ENCODE measurements at regions of chr20 and their contacts with region 1.

Region 1: DNA sequence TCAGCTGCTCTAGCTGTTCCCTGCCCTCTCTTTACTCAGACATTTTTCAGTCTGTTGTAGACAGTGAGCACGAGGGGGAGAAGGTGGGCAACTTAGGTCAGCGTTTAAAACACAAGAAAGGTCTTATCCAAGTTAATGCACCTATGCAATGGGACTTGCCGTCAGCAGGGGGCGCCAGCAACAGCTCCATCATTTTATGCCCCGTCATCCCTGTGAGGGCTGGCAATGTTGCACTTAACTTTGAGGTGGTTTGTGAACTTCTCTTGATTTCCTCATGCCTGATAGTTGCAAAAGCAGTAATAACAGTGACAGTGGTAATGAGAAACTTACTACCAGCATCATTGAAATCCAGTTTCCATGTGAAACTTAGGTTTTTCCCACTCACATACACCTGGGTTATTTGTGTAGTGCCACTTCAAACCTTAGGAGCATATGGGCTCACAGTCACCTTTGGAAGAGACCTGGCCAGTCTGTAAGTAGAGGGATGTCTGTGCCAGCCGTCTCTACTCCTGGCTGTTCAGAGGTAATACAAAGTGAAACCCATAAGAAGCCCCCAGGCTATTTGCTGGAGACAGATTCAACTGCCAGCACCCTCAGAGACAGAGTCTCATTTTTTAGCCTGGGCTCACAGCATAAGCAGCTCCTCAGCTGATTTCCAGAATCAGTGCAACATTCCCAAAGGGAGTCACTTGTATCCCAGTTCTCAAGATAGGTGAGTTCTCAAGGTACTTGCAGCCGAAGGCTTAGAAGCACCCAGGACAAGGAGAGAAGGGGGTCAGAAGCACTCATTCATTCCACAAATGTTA is 44.8 kb upstream of the ID1 start:
- DNase-seq: peak; percentile 71 to 89 (median 76)
- ATAC-seq: peak; percentile 79
- H3K4me3 ChIP-seq: no peak overlapping the region
- H3K27ac ChIP-seq: peak overlapping the region; percentile 57
- H3K4me1 ChIP-seq: peaks cover 9 to 25% of the 10 kb centered on the region in 2 experiments; a peak in 4 of 5 replicates
- H3K27me3 ChIP-seq: no peaks in the 10 kb centered on the region
- CTCF ChIP-seq: peak; percentile 91 to 99 (median 95)
- EP300 ChIP-seq: peak; percentile 54
- POLR2A ChIP-seq: no peak
- RAD21 ChIP-seq: peak; percentile 64 to 76

Region 2: DNA sequence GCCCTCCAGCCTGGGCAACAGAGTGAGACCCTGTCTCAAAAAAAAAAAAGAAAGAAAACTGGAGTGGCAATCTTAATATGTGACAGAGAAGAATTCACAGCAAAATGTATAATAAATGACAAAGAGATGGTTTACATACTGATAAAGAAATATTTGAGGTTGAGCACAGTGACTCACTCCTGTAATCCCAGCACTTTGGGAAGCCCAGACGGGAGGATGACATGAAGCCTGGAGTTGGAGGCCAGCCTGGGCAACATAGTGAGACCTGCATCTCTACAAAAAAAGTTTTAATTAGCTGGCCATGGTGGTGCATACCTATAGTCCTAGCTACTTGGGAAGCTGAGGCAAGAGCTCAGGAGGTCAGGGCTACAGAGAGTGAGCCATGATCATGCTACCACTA is 204.3 kb before region 1 on chr20:
- CTCF ChIA-PET with region 1: no interaction called
- POLR2A ChIA-PET with region 1: no interaction called
- in situ Hi-C with region 1: no loop called
- intact Hi-C with region 1: no loop called
- DNase-seq: no peak
- ATAC-seq: no peak
- H3K4me3 ChIP-seq: no peak overlapping the region
- H3K27ac ChIP-seq: no peak overlapping the region
- H3K4me1 ChIP-seq: no peaks in the 10 kb centered on the region
- H3K27me3 ChIP-seq: no peaks in the 10 kb centered on the region
- CTCF ChIP-seq: no peak
- EP300 ChIP-seq: no peak
- POLR2A ChIP-seq: no peak
- RAD21 ChIP-seq: no peak

Region 3: DNA sequence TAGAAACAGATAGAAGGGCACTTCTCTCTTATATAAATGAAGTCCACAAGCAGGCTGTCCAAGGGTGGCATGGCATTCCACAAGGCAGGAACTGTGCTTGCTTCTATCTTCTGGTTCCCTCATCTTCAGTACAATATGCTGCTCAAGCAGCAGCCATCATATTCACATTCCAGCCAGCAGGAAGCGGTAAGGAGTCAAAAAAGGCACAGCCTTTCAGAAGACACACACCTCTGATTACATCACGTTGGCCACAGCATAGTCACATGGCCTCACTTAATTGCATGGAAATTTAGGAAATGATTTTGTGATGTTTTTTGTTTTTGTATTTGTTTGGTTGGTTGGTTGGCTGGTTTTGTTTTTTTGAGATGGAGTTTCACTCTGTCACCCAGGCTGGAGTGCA is 66.2 kb before region 1 on chr20:
- CTCF ChIA-PET with region 1: no interaction called
- POLR2A ChIA-PET with region 1: no interaction called
- in situ Hi-C with region 1: no loop called
- intact Hi-C with region 1: no loop called
- DNase-seq: peak; percentile 68 to 75 (median 72)
- ATAC-seq: peak; percentile 96
- H3K4me3 ChIP-seq: no peak overlapping the region
- H3K27ac ChIP-seq: no peak overlapping the region
- H3K4me1 ChIP-seq: peaks cover 0 to 4% of the 10 kb centered on the region in 2 experiments; a peak in 2 of 5 replicates
- H3K27me3 ChIP-seq: peaks cover 4 to 12% of the 10 kb centered on the region in 2 experiments; a peak in 4 of 5 replicates
- CTCF ChIP-seq: peak; percentile 66 to 82 (median 80)
- EP300 ChIP-seq: no peak
- POLR2A ChIP-seq: no peak
- RAD21 ChIP-seq: peak in 1 of 2 experiments; percentile 40; a peak in 2 of 4 replicates

Region 4: DNA sequence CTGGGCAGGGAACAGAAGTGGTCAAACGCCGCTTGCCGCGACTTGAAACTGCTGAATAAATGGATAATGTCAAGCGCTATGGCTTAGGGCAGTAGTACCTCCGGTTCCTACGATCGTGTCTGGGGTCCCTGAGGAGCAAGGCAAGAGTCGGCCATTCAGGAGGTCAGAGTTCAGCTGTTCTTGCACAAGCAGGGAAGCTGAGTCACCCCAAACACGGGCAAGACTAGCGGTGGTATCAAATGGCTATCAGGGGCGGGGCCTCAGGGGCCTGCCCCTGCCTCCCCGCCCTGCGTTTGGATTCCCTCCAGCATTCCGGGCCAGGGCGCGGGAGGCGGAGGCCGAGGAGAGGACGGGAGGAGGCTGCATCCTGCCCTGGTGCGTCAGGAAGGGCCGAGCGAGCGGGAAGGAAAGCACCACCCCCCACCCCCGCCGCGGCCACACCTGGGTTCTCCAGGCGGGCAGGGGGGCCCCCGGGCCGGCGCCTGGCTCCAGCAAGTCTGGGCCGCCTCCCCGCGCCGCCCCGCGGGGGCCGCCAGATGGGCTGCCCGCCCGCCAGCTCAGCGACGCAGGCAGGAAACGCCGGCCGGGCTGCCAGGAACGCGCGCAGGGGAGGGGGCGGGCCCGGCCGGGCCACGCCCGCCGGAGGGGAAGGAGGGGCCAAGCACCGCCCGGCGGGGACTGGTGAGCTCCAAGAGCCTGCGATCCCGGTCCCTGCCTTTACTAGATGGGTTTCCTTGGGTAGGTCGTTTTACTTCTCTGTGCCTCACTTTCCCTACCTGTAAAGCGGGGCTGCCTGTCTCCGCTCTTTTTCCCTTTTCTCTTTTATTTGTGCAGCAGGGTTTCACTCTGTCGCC is 12.6 kb after region 1 on chr20:
- CTCF ChIA-PET with region 1: interaction called, 7 read pairs
- POLR2A ChIA-PET with region 1: interaction called, 29 read pairs
- in situ Hi-C with region 1: no loop called
- intact Hi-C with region 1: no loop called
- DNase-seq: peak; percentile 93 to 99 (median 95)
- ATAC-seq: peak; percentile 87
- H3K4me3 ChIP-seq: peak overlapping the region; percentile 84
- H3K27ac ChIP-seq: peak overlapping the region; percentile 96
- H3K4me1 ChIP-seq: peaks cover 10 to 48% of the 10 kb centered on the region in 2 experiments; a peak in 4 of 5 replicates
- H3K27me3 ChIP-seq: no peaks in the 10 kb centered on the region
- CTCF ChIP-seq: peak in 2 of 3 experiments; percentile 0 to 9; a peak in 1 of 6 replicates
- EP300 ChIP-seq: peak; percentile 20
- POLR2A ChIP-seq: peak; percentile 83
- RAD21 ChIP-seq: peak; percentile 1 to 37; a peak in 1 of 4 replicates

Region 5: GRCh38 chr20:31835977-31836852 is 275.9 kb after region 1 on chr20:
- CTCF ChIA-PET with region 1: no interaction called
- POLR2A ChIA-PET with region 1: no interaction called
- in situ Hi-C with region 1: no loop called
- intact Hi-C with region 1: loop called (anchors 5 kb)
- DNase-seq: peak; percentile 87 to 90 (median 88)
- ATAC-seq: peak; percentile 87
- H3K4me3 ChIP-seq: no peak overlapping the region
- H3K27ac ChIP-seq: peak overlapping the region; percentile 49; the same call in 2 of the 3 replicates
- H3K4me1 ChIP-seq: peaks cover 35 to 51% of the 10 kb centered on the region in 2 experiments
- H3K27me3 ChIP-seq: no peaks in the 10 kb centered on the region
- CTCF ChIP-seq: no peak
- EP300 ChIP-seq: peak; percentile 46; the same call in 1 of the 2 replicates
- POLR2A ChIP-seq: no peak
- RAD21 ChIP-seq: no peak

Region 6: GRCh38 chr20:33065785-33066184 is 1505.5 kb after region 1 on chr20:
- CTCF ChIA-PET with region 1: no interaction called
- POLR2A ChIA-PET with region 1: no interaction called
- in situ Hi-C with region 1: no loop called
- intact Hi-C with region 1: no loop called
- DNase-seq: no peak
- ATAC-seq: no peak
- H3K4me3 ChIP-seq: no peak overlapping the region
- H3K27ac ChIP-seq: no peak overlapping the region
- H3K4me1 ChIP-seq: no peaks in the 10 kb centered on the region
- H3K27me3 ChIP-seq: peaks cover 28 to 72% of the 10 kb centered on the region in 2 experiments; a peak in 4 of 5 replicates
- CTCF ChIP-seq: no peak
- EP300 ChIP-seq: no peak
- POLR2A ChIP-seq: no peak
- RAD21 ChIP-seq: no peak